Sigmoid colon (tissue), 7 donors: ENCODE measurements at regions of chr3 and their contacts with region 1.

Region 1: DNA sequence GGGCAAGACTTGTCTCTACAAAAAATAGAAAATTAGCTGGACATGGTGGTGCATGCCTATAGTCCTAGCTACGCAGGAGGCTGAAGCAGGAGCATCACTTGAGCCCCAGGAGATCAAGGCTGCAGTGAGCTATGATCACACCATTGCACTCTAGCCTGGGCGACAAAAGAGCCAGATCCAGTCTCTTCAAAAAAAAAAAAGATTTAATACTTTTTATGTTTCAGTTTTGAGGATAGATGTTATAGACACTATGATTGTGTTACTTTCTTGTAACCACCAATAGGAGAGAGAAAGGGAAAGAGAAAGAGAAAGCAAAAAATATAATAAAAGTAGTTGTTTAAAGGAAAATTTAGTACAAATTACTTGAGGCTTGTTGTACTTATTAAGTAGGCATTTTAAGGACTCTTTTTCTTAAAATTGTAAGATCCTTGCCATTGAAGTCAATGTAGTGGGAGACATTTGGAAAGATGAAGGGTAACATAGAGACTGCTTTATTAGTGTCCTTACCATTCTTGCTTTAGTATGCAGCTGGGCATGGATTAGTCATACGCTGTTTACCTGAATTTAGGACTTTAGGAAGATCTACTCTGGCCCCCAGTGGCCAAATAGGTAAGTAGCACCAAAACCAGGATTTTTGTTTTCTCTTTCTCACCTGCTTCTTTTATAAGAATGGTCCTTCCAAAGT is 35.1 kb upstream of the ZDHHC23 start:
- DNase-seq: no peak
- H3K4me3 ChIP-seq: no peak overlapping the region
- H3K27ac ChIP-seq: no peak overlapping the region
- H3K4me1 ChIP-seq: no peaks in the 10 kb centered on the region
- H3K27me3 ChIP-seq: no peaks in the 10 kb centered on the region
- CTCF ChIP-seq: peak in 3 of 4 experiments; percentile 23 to 46 (median 27)
- EP300 ChIP-seq: no peak
- POLR2A ChIP-seq: no peak

Region 2: GRCh38 chr3:113844622-113845222 is 68.0 kb before region 1 on chr3:
- intact Hi-C with region 1: loop called (anchors 5 kb)
- DNase-seq: no peak
- H3K4me3 ChIP-seq: no peak overlapping the region
- H3K27ac ChIP-seq: no peak overlapping the region
- H3K4me1 ChIP-seq: no peaks in the 10 kb centered on the region
- H3K27me3 ChIP-seq: no peaks in the 10 kb centered on the region
- CTCF ChIP-seq: peak in 3 of 4 experiments; percentile 21 to 33 (median 32)
- EP300 ChIP-seq: no peak
- POLR2A ChIP-seq: no peak

Region 3: GRCh38 chr3:113897373-113897777 is 15.3 kb before region 1 on chr3:
- intact Hi-C with region 1: no loop called
- DNase-seq: no peak
- H3K4me3 ChIP-seq: peak overlapping the region in 1 of 4 donors; percentile 5
- H3K27ac ChIP-seq: no peak overlapping the region
- H3K4me1 ChIP-seq: no peaks in the 10 kb centered on the region
- H3K27me3 ChIP-seq: no peaks in the 10 kb centered on the region
- CTCF ChIP-seq: no peak
- EP300 ChIP-seq: no peak
- POLR2A ChIP-seq: no peak

Region 4: GRCh38 chr3:114005481-114005880 is 92.8 kb after region 1 on chr3:
- intact Hi-C with region 1: no loop called
- DNase-seq: no peak
- H3K4me3 ChIP-seq: no peak overlapping the region
- H3K27ac ChIP-seq: no peak overlapping the region
- H3K4me1 ChIP-seq: no peaks in the 10 kb centered on the region
- H3K27me3 ChIP-seq: no peaks in the 10 kb centered on the region
- CTCF ChIP-seq: no peak
- EP300 ChIP-seq: no peak
- POLR2A ChIP-seq: no peak

Region 5: GRCh38 chr3:114152519-114153151 is 239.9 kb after region 1 on chr3:
- intact Hi-C with region 1: no loop called
- DNase-seq: peak; percentile 86
- H3K4me3 ChIP-seq: peak overlapping the region; percentile 22 to 61 (median 50)
- H3K27ac ChIP-seq: peak overlapping the region in 2 of 4 donors; percentile 16 to 64
- H3K4me1 ChIP-seq: peaks cover 0 to 6% (median 3%) of the 10 kb centered on the region in 4 donors
- H3K27me3 ChIP-seq: no peaks in the 10 kb centered on the region
- CTCF ChIP-seq: peak; percentile 40 to 86 (median 78)
- EP300 ChIP-seq: no peak
- POLR2A ChIP-seq: no peak